Naive thymus-derived CD4-positive, alpha-beta T cell (primary cell): ENCODE measurements at regions of chr7 and their contacts with region 1.

Region 1: GRCh38 chr7:142478479-142479072 is 220.7 kb upstream of the PRSS58 start:
- DNase-seq: peak in 2 of 9 donors; percentile 27 to 32
- ATAC-seq: peak; percentile 62
- H3K4me3 ChIP-seq: no peak overlapping the region
- H3K4me3 Mint-ChIP-seq: peak overlapping the region in 9 of 10 donors; percentile 22 to 84 (median 71)
- H3K27ac ChIP-seq: peak overlapping the region; percentile 62
- H3K27ac Mint-ChIP-seq: peak overlapping the region; percentile 43 to 96 (median 90)
- H3K4me1 ChIP-seq: peaks cover 13 to 76% of the 10 kb centered on the region in 2 donors
- H3K4me1 Mint-ChIP-seq: peaks cover 48 to 94% (median 85%) of the 10 kb centered on the region in 7 donors
- H3K27me3 ChIP-seq: no peaks in the 10 kb centered on the region
- H3K27me3 Mint-ChIP-seq: no peaks in the 10 kb centered on the region

Region 2: DNA sequence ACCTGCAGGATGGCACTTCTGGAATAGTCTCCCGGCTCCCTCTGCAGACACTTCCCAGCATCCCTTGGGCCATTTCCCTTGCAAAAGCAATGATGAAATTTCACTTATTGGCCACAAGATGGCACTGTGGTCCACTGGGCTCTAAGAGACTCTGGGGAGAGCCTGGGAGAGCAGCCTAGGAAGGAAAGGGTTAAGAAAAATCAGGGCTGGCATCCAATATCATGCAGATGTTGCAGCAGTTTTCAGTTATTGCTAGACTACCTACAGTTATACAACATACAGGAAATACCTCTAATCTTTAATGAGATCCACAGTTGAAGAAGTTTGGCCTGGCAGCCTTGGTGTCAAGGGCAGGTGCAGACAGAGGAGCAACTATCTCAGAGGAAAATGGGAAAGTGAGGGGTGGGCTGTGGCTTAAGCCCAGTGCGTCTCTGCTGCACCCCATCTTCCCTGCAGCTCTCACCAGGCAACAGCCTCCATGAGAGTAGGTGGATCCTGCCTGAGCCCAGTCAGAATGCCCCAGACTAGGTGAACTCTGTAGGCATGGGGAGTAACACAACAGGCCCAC is 120.5 kb before region 1 on chr7:
- CTCF ChIA-PET with region 1: no interaction called
- POLR2A ChIA-PET with region 1: no interaction called
- intact Hi-C with region 1: loop called in 1 of 2 experiments (anchors 5 kb)
- DNase-seq: peak in 8 of 9 donors; percentile 29 to 56 (median 44)
- ATAC-seq: peak; percentile 71
- H3K4me3 ChIP-seq: no peak overlapping the region
- H3K4me3 Mint-ChIP-seq: peak overlapping the region in 2 of 10 donors; percentile 21 to 26
- H3K27ac ChIP-seq: no peak overlapping the region
- H3K27ac Mint-ChIP-seq: peak overlapping the region in 5 of 9 donors; percentile 10 to 68 (median 35)
- H3K4me1 ChIP-seq: peaks cover 0 to 30% of the 10 kb centered on the region in 2 donors
- H3K4me1 Mint-ChIP-seq: peaks cover 13 to 58% (median 47%) of the 10 kb centered on the region in 7 donors
- H3K27me3 ChIP-seq: no peaks in the 10 kb centered on the region
- H3K27me3 Mint-ChIP-seq: peaks cover 0 to 39% (median 0%) of the 10 kb centered on the region in 5 donors

Region 3: GRCh38 chr7:142412551-142413193 is 65.9 kb before region 1 on chr7:
- CTCF ChIA-PET with region 1: interaction called, 6 read pairs
- POLR2A ChIA-PET with region 1: no interaction called
- intact Hi-C with region 1: loop called (anchors 1 kb)
- DNase-seq: peak in 8 of 9 donors; percentile 19 to 58 (median 38)
- ATAC-seq: peak; percentile 88
- H3K4me3 ChIP-seq: no peak overlapping the region
- H3K4me3 Mint-ChIP-seq: peak overlapping the region in 6 of 10 donors; percentile 8 to 56 (median 26)
- H3K27ac ChIP-seq: no peak overlapping the region
- H3K27ac Mint-ChIP-seq: peak overlapping the region in 3 of 9 donors; percentile 3 to 69 (median 6)
- H3K4me1 ChIP-seq: peaks cover 0 to 3% of the 10 kb centered on the region in 2 donors
- H3K4me1 Mint-ChIP-seq: peaks cover 4 to 7% (median 6%) of the 10 kb centered on the region in 7 donors
- H3K27me3 ChIP-seq: no peaks in the 10 kb centered on the region
- H3K27me3 Mint-ChIP-seq: peaks cover 0 to 19% (median 0%) of the 10 kb centered on the region in 5 donors

Region 4: DNA sequence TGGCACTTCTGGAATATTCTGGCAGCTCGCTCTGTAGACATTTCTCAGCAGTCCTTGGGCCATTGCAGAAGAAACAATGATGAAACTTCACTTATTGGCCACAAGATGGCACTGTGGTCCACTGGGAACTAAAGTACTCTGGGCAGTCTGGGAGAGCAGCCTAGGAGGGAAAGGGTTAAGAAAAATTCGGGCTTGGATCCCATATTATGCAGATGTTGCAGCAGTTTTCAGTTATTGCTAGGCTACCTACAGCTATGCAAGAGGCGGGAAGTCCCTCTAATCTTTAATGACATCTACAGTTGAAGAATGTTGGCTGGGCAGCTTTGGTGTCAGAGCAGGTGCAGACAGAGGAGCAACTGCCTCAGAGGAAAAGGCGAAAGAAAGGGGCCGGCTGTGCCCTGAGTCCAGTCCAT is 19.0 kb before region 1 on chr7:
- CTCF ChIA-PET with region 1: interaction called, 452 read pairs
- POLR2A ChIA-PET with region 1: interaction called, 58 read pairs
- intact Hi-C with region 1: loop called (anchors 1 kb)
- DNase-seq: peak in 5 of 9 donors; percentile 19 to 42 (median 34)
- ATAC-seq: peak; percentile 72
- H3K4me3 ChIP-seq: no peak overlapping the region
- H3K4me3 Mint-ChIP-seq: peak overlapping the region; percentile 12 to 83 (median 47)
- H3K27ac ChIP-seq: peak overlapping the region; percentile 46
- H3K27ac Mint-ChIP-seq: peak overlapping the region; percentile 24 to 92 (median 67)
- H3K4me1 ChIP-seq: peaks cover 4 to 42% of the 10 kb centered on the region in 2 donors
- H3K4me1 Mint-ChIP-seq: peaks cover 38 to 86% (median 81%) of the 10 kb centered on the region in 7 donors
- H3K27me3 ChIP-seq: no peaks in the 10 kb centered on the region
- H3K27me3 Mint-ChIP-seq: peaks cover 0 to 7% (median 0%) of the 10 kb centered on the region in 5 donors

Region 5: DNA sequence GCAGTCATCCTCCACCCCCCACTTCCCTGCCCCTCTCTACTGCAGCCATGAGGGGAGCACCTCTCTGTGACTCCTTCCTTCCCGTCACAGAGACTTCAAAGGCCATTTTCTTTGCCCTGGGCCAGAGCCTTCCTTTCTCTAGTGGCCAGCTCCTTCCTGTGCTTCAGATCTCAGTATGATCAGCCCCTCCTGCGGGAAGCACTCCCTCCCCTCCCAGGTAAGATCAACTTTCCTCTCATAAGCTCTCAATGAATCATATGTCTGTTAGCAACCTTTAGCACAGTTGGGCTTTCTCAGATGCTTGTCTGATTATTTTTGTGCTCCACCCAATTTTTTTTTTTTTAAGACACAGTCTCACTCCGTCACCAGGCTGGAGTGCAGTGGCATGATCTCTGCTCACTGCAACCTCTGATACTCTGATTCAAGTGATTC is 29.7 kb after region 1 on chr7:
- CTCF ChIA-PET with region 1: interaction called, 19 read pairs
- POLR2A ChIA-PET with region 1: no interaction called
- intact Hi-C with region 1: no loop called
- DNase-seq: peak in 7 of 9 donors; percentile 30 to 57 (median 37)
- ATAC-seq: peak; percentile 65
- H3K4me3 ChIP-seq: no peak overlapping the region
- H3K4me3 Mint-ChIP-seq: peak overlapping the region in 9 of 10 donors; percentile 26 to 66 (median 59)
- H3K27ac ChIP-seq: peak overlapping the region; percentile 58
- H3K27ac Mint-ChIP-seq: peak overlapping the region; percentile 59 to 96 (median 92)
- H3K4me1 ChIP-seq: peaks cover 0 to 38% of the 10 kb centered on the region in 2 donors
- H3K4me1 Mint-ChIP-seq: peaks cover 9 to 65% (median 53%) of the 10 kb centered on the region in 7 donors
- H3K27me3 ChIP-seq: no peaks in the 10 kb centered on the region
- H3K27me3 Mint-ChIP-seq: peaks cover 0 to 20% (median 0%) of the 10 kb centered on the region in 5 donors